PC-3 (cell line): ENCODE measurements at regions of chr12 and their contacts with region 1.

Region 1: GRCh38 chr12:76031537-76032073 is at the start of gene PHLDA1:
- DNase-seq: peak; percentile 98
- ATAC-seq: peak; percentile 75
- H3K4me3 ChIP-seq: peak within 1 kb of the TSS; percentile 97
- H3K27ac ChIP-seq: peak within 1 kb of the TSS; percentile 94
- H3K4me1 ChIP-seq: peaks cover 34% of the 10 kb centered on the region
- H3K27me3 ChIP-seq: no peaks in the 10 kb centered on the region
- CTCF ChIP-seq: peak; percentile 34; the same call in 1 of the 2 replicates
- total RNA-seq, gene PHLDA1: 181 and 218 TPM in 2 replicates

Region 2: DNA sequence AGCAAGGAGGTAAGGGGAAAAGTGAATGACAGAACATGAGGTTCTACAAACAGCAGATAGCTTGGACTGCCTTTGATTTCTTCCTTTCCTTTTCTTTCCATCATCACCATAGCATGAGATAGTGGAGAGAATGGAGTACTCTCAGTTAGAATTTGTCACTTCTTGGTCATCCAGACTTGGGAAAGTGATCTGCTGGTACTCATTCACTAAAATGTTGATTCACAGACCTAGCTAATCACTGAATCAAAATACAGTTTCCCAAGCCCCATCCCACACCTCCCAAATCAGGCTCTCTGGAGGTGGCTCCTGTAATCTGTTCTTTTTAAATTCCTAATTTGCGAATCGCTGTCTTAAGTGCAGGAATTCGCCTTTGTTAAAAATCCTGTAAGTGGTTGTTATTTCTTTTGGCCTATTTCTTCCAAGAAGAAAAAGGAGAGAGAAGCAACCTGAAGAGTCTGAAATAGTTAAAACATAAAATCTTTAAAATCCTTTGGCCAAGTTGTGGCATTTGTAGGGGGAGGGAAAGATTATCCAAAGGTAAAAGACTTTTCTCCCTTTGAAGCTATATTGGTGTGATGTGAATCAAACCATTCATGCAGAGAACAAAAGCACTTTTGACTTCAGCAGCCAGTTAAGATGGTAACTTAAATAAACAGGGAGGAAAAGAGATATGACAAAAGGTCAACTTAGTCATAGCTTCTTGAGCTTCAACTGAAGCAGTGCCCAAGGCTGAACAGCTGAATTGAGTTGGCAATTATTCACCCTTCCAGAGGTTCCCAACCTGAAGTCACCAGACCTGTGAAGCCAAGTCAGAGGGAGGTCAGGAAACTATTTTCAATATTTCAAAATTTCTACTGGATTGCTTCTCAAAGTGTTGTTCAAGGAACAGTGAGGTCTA is 265.1 kb before region 1 on chr12:
- CTCF ChIA-PET with region 1: no interaction called
- POLR2A ChIA-PET with region 1: interaction called, 3 read pairs
- intact Hi-C with region 1: loop called (anchors 5 kb)
- DNase-seq: peak; percentile 94
- ATAC-seq: peak; percentile 89
- H3K4me3 ChIP-seq: no peak overlapping the region
- H3K27ac ChIP-seq: peak overlapping the region; percentile 85
- H3K4me1 ChIP-seq: peaks cover 35% of the 10 kb centered on the region
- H3K27me3 ChIP-seq: no peaks in the 10 kb centered on the region
- CTCF ChIP-seq: no peak

Region 3: DNA sequence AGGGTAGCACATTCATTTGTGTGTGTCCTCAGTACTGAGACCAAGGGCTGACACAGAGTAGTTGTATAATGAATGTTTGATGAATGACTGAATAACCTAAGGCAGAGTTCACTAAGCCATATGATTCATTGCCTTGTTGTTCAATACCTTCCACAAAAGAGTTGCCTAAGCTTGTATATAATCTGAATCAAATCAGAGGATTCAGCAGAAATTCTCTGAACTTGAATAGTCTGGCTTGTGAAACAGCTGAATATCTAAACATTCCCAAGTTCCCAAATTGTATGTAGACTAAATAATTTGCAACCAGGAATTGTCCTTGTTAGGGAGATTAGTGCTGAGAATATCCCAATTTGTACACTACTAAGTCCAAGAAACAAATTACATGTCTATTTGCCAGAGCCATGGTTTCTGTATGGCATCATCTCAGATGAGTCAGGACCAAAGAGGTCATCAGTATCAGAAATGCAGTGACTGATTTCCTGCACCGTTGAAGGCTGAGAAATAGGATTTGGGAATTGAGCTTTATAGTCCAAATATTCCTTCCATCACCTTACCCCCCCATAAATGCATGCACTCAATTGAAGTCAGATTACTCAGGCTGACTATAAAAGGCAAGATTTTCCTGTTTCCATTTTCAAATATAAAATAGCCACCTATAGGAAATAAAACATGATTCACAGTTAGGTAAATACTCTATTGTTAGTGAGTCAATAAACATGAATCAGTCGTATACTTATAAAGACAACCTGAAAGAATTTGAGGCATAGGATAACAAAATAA is 168.7 kb before region 1 on chr12:
- CTCF ChIA-PET with region 1: interaction called, 4 read pairs
- POLR2A ChIA-PET with region 1: interaction called, 11 read pairs
- intact Hi-C with region 1: no loop called
- DNase-seq: peak; percentile 97
- ATAC-seq: peak; percentile 77
- H3K4me3 ChIP-seq: peak overlapping the region; percentile 36; the same call in 1 of the 2 replicates
- H3K27ac ChIP-seq: peak overlapping the region; percentile 98
- H3K4me1 ChIP-seq: peaks cover 57% of the 10 kb centered on the region
- H3K27me3 ChIP-seq: no peaks in the 10 kb centered on the region
- CTCF ChIP-seq: no peak

Region 4: GRCh38 chr12:76586764-76587395 is 555.3 kb after region 1 on chr12:
- CTCF ChIA-PET with region 1: no interaction called
- POLR2A ChIA-PET with region 1: interaction called, 4 read pairs
- intact Hi-C with region 1: loop called (anchors 10 kb)
- DNase-seq: peak; percentile 60
- ATAC-seq: peak; percentile 43
- H3K4me3 ChIP-seq: no peak overlapping the region
- H3K27ac ChIP-seq: no peak overlapping the region
- H3K4me1 ChIP-seq: peaks cover 6% of the 10 kb centered on the region
- H3K27me3 ChIP-seq: no peaks in the 10 kb centered on the region
- CTCF ChIP-seq: peak; percentile 89